ENCODE measurements at regions of chr4 and their contacts with region 1.

Region 1: DNA sequence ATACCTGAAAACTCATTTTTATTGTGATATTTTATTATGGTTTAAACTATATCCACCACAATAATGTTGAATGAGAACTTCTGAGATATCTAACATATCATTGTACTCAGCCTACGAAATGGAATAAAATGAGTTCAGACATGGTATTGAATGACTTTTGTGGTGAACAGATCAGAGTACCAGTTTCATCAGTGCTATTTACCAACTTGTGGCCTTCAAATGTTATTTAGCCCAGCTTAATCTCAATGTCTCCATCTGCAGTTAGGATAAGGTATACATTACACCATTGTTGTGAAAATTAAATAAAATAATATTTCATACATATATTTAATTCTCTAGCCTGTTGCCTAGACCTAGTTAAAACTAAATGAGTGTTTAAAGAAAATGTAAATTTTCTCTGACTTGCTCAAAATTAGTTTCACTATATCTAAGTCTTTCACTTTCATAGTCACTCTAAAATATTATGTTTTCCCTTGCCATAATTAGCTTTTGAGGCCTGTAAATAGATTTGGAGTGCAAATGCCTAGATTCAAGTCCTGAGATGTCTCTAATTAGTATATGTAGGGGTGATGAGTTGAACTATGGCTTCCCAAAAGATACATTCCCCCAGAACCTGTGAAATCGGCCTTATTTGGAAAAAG is 594.2 kb downstream of the STPG2 start:
- DNase-seq: no peak
- H3K4me3 ChIP-seq: no peak overlapping the region
- H3K27ac ChIP-seq: no peak overlapping the region
- H3K4me1 ChIP-seq: no peaks in the 10 kb centered on the region
- H3K27me3 ChIP-seq: no peaks in the 10 kb centered on the region
- CTCF ChIP-seq: no peak
- EP300 ChIP-seq: no peak
- POLR2A ChIP-seq: no peak

Region 2: GRCh38 chr4:97027728-97028410 is 521.2 kb before region 1 on chr4:
- intact Hi-C with region 1: no loop called
- DNase-seq: no peak
- H3K4me3 ChIP-seq: no peak overlapping the region
- H3K27ac ChIP-seq: no peak overlapping the region
- H3K4me1 ChIP-seq: no peaks in the 10 kb centered on the region
- H3K27me3 ChIP-seq: no peaks in the 10 kb centered on the region
- CTCF ChIP-seq: no peak
- EP300 ChIP-seq: no peak
- POLR2A ChIP-seq: no peak

Region 3: GRCh38 chr4:97513917-97514316 is 35.1 kb before region 1 on chr4:
- intact Hi-C with region 1: loop called in 1 of 4 experiments (anchors 2 kb)
- DNase-seq: no peak
- H3K4me3 ChIP-seq: no peak overlapping the region
- H3K27ac ChIP-seq: no peak overlapping the region
- H3K4me1 ChIP-seq: no peaks in the 10 kb centered on the region
- H3K27me3 ChIP-seq: no peaks in the 10 kb centered on the region
- CTCF ChIP-seq: no peak
- EP300 ChIP-seq: no peak
- POLR2A ChIP-seq: no peak